ENCODE measurements at regions of chr10 and their contacts with region 1.

Region 1: GRCh38 chr10:96129387-96130325 is at the start of gene ZNF518A:
- DNase-seq: peak; percentile 83
- H3K4me3 Mint-ChIP-seq: peak within 1 kb of the TSS; percentile 89
- H3K27ac Mint-ChIP-seq: peak within 1 kb of the TSS; percentile 94
- H3K4me1 Mint-ChIP-seq: no peaks in the 10 kb centered on the region
- H3K27me3 Mint-ChIP-seq: no peaks in the 10 kb centered on the region
- CTCF ChIP-seq: no peak
- total RNA-seq, gene ZNF518A: 16.0 and 18.5 TPM in 2 replicates

Region 2: DNA sequence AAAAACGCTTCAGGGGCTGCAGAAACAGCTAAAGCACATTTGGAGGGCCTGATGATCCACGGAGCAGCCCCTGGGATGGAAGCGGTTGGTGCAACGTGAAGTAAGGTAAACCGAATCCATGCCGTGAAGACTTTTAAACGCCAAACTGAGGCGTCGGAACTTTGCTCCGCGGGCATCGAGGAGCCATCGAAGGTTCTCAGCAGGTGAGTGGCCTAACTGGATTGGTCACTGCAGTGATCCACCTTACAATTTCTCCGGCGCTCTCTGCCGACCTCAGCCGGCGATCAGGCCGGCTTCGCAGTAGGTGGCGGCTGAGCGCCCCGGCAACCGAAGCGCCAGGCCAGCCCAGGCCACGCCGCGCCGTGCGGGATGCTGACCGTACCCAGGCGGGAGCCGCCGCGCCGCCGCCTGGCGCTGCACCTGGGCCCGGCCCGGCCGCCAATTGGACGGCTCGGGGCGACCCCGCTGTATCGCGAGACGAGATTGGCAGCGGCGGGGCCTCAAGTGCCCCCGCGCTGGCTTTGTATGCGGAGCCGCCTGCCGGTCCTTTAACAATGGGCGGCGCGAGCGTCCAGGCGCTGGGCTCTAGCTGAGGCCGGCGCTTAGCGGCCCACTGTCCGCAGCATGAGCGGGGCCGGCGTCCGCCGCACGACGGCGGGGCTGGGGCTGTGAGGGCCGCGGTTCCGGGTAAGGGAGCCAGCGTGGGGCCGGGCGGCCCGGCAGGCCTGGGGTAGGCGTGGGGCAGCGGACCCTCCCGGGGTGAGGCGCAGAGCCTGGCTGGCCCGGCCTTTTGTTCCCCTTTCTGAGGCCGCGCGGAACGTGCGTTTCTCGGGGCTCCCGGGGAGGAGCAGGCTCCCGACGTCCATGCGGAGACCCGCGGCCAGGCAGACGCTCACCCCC is 86.4 kb before region 1 on chr10 and contains the start of gene CCNJ:
- CTCF ChIA-PET with region 1: interaction called, 5 read pairs
- intact Hi-C with region 1: loop called (anchors 1 kb)
- DNase-seq: peak; percentile 86
- H3K4me3 Mint-ChIP-seq: peak within 1 kb of the TSS; percentile 95
- H3K27ac Mint-ChIP-seq: peak within 1 kb of the TSS; percentile 75
- H3K4me1 Mint-ChIP-seq: no peaks in the 10 kb centered on the region
- H3K27me3 Mint-ChIP-seq: no peaks in the 10 kb centered on the region
- CTCF ChIP-seq: no peak
- total RNA-seq, gene CCNJ: 5.6 and 5.9 TPM in 2 replicates

Region 3: DNA sequence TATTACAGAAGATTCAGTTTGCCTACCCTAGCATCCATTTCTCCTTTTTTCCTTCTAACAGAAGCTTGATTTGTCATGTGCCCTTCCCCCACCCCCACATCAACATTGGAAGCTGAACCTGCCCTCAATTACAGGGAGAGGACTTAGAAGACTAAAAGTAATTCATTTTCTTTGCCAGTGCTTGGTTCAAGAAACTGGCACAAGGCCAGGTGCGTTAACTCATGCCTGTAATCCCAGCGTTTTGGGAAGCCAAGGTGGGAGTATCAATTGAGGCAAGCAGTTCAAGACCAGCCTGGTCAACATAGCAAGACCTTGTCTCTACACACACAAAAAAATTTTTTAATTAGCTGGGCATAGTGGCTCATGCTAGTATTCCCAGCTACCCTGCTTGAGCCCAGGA is 53.7 kb before region 1 on chr10:
- CTCF ChIA-PET with region 1: no interaction called
- intact Hi-C with region 1: no loop called
- DNase-seq: no peak
- H3K4me3 Mint-ChIP-seq: no peak overlapping the region
- H3K27ac Mint-ChIP-seq: no peak overlapping the region
- H3K4me1 Mint-ChIP-seq: no peaks in the 10 kb centered on the region
- H3K27me3 Mint-ChIP-seq: no peaks in the 10 kb centered on the region
- CTCF ChIP-seq: no peak

Region 4: GRCh38 chr10:96089670-96090462 is 39.8 kb before region 1 on chr10:
- CTCF ChIA-PET with region 1: interaction called, 3 read pairs
- intact Hi-C with region 1: loop called (anchors 2 kb)
- DNase-seq: peak; percentile 88
- H3K4me3 Mint-ChIP-seq: peak overlapping the region; percentile 73
- H3K27ac Mint-ChIP-seq: peak overlapping the region; percentile 94
- H3K4me1 Mint-ChIP-seq: no peaks in the 10 kb centered on the region
- H3K27me3 Mint-ChIP-seq: peaks cover 19% of the 10 kb centered on the region
- CTCF ChIP-seq: no peak

Measured in Calu3 (cell line).